ENCODE measurements at regions of chr19 and their contacts with region 1.

Region 1: DNA sequence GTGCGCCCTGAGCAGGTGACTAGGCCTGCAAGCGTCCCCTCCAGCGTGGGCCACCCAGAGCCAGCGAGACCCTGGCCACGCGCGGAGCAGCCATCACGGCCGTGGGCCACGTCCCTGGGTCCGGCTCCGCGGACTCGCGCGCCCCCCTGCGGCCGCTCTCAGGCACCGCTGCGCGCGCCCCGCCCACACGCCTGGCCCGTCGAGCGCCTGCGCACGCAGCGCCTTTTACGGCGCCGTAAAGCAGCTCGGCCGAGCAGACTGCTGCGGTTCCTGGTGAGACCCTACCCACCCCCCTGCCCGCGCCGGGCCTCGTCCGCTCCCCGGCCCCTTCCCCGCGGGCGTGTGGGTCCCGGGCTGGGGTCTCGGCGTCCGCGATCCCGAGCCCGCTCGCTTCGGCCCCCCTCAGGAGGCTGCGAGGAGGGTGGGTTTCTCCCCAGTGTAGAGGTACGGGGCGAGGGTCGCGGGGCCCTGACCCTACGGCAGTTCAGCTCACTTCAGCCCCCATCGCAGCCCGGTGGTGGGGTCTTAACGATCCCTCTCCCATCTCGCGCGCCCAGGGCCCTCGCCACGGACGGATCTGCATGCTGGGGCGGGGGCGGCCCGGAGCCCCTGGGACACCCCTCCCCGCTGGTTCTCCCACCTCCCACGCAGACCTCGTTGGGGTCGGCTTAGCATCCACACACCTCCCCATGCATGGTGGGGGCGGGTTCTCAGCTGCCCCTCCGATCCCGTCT is at the start of gene TRAPPC5:
- DNase-seq: peak; percentile 74 to 92 (median 82)
- H3K4me3 ChIP-seq: peak within 1 kb of the TSS; percentile 71 to 100 (median 98)
- H3K27ac ChIP-seq: peak within 1 kb of the TSS in 57 of 59 donors; percentile 35 to 98 (median 87)
- H3K27me3 ChIP-seq: peaks cover 0 to 8% (median 0%) of the 10 kb centered on the region in 45 donors
- CTCF ChIP-seq: peak; percentile 76 to 100 (median 97)
- total RNA-seq, gene TRAPPC5: 59.2 to 143 (median 100) TPM

Region 2: DNA sequence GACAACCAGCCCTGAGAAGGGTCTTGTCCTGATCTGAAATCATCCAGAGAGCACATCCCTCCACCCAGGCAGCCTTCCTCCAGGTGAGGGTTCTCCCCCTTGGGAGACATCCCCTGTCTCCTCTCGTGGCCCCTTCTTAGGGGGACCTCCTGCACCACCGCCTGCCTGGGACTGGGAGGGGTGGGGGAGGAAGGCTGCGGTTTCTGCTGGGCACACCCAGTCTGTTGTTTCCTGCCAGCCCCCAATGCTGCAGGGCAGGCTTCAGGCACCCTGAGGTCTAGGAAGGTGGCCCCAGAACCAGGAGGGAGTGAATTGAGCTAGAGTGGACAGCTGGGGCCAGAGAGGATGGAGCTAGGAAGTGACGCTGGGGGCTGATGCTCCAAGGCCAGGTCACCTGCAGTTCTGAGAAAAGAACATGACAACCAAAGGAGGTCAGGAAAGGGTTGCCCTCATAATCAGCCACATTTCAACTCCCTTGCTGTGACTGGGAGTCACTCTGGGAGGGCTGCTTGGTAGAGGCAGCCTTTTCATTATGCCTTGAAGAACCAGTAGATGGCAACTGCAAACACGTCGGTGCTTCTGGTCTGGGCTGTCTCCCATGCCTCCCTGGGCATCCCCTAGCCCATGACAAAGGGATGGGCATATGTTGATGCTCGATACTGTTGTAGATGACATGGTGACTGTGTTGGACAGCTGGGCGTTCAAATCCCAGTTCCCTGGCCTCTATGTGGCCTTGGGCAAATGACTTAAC is 330.6 kb before region 1 on chr19:
- intact Hi-C with region 1: loop called (anchors 2 to 10 kb)
- DNase-seq: peak in 3 of 10 donors; percentile 2 to 15 (median 5)
- H3K4me3 ChIP-seq: no peak overlapping the region
- H3K27ac ChIP-seq: no peak overlapping the region
- H3K27me3 ChIP-seq: no peaks in the 10 kb centered on the region
- CTCF ChIP-seq: no peak

Region 3: DNA sequence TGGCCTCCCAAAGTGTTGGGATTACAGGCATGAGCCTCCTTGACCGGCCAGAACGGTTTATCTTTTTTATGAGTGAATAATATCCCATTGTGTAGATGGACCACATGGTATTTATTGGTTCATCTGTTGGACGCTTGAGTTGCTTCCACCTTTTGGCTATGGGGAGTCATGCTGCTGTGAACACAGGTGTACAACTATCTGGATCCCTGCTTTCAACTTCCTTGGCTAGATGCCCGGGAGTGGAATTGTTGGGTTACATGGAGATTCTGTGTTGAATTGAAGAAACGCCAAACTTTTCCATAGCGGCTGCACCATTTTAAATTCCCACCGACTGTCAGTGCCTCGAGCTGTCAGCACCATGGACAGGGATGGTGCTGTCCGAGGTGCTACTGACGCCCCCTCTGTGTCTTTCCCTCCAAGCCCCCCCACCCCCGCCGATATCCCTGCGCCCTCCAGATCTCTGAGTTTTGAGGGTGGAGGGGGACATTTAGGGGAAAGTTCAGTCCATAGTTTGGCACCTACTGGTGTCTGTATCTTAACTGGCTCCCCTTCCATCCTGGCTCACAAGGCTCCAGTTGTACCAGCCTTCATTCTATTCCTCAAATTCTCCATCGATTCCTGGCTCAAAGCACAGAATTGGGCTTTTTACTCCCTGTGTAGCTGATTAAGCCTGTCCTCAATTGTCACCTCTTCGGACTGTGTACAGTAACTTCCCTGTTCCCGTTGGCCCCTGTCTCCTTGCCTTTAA is 118.0 kb before region 1 on chr19:
- intact Hi-C with region 1: loop called in 1 of 2 experiments (anchors 2 kb)
- DNase-seq: no peak
- H3K4me3 ChIP-seq: no peak overlapping the region
- H3K27ac ChIP-seq: no peak overlapping the region
- H3K27me3 ChIP-seq: no peaks in the 10 kb centered on the region
- CTCF ChIP-seq: no peak

Region 4: GRCh38 chr19:7799640-7800355 is 119.0 kb after region 1 on chr19:
- intact Hi-C with region 1: loop called (anchors 2 to 5 kb)
- DNase-seq: peak in 9 of 10 donors; percentile 46 to 81 (median 66)
- H3K4me3 ChIP-seq: peak overlapping the region in 58 of 59 donors; percentile 16 to 68 (median 44)
- H3K27ac ChIP-seq: peak overlapping the region in 21 of 59 donors; percentile 10 to 70 (median 39)
- H3K27me3 ChIP-seq: peaks cover 0 to 9% (median 0%) of the 10 kb centered on the region in 45 donors
- CTCF ChIP-seq: peak; percentile 44 to 85 (median 72)

Region 5: DNA sequence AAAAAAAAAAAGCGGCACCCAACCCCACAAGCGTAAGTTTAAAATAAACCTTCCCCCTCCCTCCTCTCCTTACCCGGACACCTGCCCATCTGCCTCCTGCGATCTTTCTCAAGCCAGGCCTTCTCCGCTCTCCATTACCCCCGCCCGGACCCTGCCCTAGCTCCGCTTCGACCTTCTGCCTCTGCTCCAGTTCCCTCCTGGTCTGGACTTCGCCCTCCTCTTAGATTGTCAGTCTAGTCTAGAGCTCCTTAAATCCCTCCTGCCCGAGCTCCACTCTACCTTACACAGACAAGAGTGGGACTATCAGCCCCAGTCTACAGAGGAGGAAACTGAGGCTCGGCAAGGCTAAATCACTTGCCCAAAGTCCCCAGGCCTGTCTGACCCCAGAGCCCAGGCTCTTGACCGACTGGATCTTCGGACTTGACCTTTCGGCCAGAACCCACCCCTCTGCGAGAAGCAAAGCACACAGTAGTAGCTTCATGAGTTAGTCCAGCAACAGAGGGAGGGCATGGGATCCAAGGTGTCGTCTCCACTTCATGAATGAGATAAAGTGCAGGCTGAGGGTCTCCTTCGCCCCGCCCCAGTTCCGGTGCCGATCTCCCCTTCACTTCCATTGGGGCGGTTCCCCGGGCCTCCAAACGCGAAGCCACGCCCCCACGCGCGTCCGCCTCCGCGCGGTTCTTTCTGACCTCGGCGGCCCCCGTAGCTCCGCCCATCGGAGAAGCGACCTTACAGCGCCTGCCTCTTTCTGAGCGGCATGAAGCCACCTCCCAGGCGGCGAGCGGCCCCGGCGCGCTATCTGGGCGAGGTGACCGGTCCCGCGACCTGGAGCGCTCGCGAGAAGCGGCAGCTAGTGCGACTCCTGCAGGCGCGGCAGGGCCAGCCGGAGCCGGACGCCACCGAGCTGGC is 239.1 kb after region 1 on chr19 and contains the start of gene SNAPC2:
- intact Hi-C with region 1: loop called in 1 of 2 experiments (anchors 10 kb)
- DNase-seq: peak; percentile 86 to 95 (median 90)
- H3K4me3 ChIP-seq: peak within 1 kb of the TSS; percentile 59 to 90 (median 77)
- H3K27ac ChIP-seq: peak within 1 kb of the TSS; percentile 66 to 98 (median 92)
- H3K27me3 ChIP-seq: peaks cover 0 to 41% (median 21%) of the 10 kb centered on the region in 45 donors
- CTCF ChIP-seq: peak in 32 of 56 donors; percentile 11 to 45 (median 26)
- total RNA-seq, gene SNAPC2: 11.3 to 27.9 (median 16.9) TPM

Measured in dorsolateral prefrontal cortex (tissue), 120 donors.